Heart left ventricle (tissue), 16 donors: ENCODE measurements at regions of chr3 and their contacts with region 1.

Region 1: GRCh38 chr3:83821506-83821905 is 1137.3 kb upstream of the CADM2 start:
- DNase-seq: no peak
- ATAC-seq: no peak
- H3K4me3 ChIP-seq: no peak overlapping the region
- H3K27ac ChIP-seq: no peak overlapping the region
- H3K4me1 ChIP-seq: no peaks in the 10 kb centered on the region
- H3K27me3 ChIP-seq: no peaks in the 10 kb centered on the region
- CTCF ChIP-seq: no peak
- POLR2A ChIP-seq: no peak

Region 2: GRCh38 chr3:83873550-83873949 is 52.0 kb after region 1 on chr3:
- intact Hi-C with region 1: loop called in 1 of 10 experiments (anchors 5 kb)
- DNase-seq: no peak
- ATAC-seq: peak in 1 of 4 donors; percentile 37
- H3K4me3 ChIP-seq: no peak overlapping the region
- H3K27ac ChIP-seq: no peak overlapping the region
- H3K4me1 ChIP-seq: peaks cover 0 to 5% (median 0%) of the 10 kb centered on the region in 12 donors
- H3K27me3 ChIP-seq: no peaks in the 10 kb centered on the region
- CTCF ChIP-seq: no peak
- POLR2A ChIP-seq: no peak

Region 3: GRCh38 chr3:83890039-83890762 is 68.7 kb after region 1 on chr3:
- intact Hi-C with region 1: no loop called
- DNase-seq: no peak
- ATAC-seq: no peak
- H3K4me3 ChIP-seq: no peak overlapping the region
- H3K27ac ChIP-seq: no peak overlapping the region
- H3K4me1 ChIP-seq: no peaks in the 10 kb centered on the region
- H3K27me3 ChIP-seq: no peaks in the 10 kb centered on the region
- CTCF ChIP-seq: no peak
- POLR2A ChIP-seq: no peak